ENCODE measurements at regions of chr4 and their contacts with region 1.

Region 1: GRCh38 chr4:48578132-48578968 is 88.3 kb downstream of the ZAR1 start:
- DNase-seq: peak; percentile 64
- ATAC-seq: peak; percentile 90
- H3K4me3 Mint-ChIP-seq: no peak overlapping the region
- H3K27ac Mint-ChIP-seq: no peak overlapping the region
- H3K4me1 Mint-ChIP-seq: peaks cover 5% of the 10 kb centered on the region
- H3K27me3 Mint-ChIP-seq: no peaks in the 10 kb centered on the region
- CTCF ChIP-seq: peak; percentile 93

Region 2: GRCh38 chr4:47668810-47669408 is 909.4 kb before region 1 on chr4:
- CTCF ChIA-PET with region 1: no interaction called
- POLR2A ChIA-PET with region 1: no interaction called
- intact Hi-C with region 1: no loop called
- DNase-seq: peak; percentile 35
- ATAC-seq: peak; percentile 65
- H3K4me3 Mint-ChIP-seq: no peak overlapping the region
- H3K27ac Mint-ChIP-seq: no peak overlapping the region
- H3K4me1 Mint-ChIP-seq: no peaks in the 10 kb centered on the region
- H3K27me3 Mint-ChIP-seq: peaks cover 10% of the 10 kb centered on the region
- CTCF ChIP-seq: peak; percentile 78

Region 3: GRCh38 chr4:48566034-48566384 is 12.3 kb before region 1 on chr4:
- CTCF ChIA-PET with region 1: no interaction called
- POLR2A ChIA-PET with region 1: no interaction called
- intact Hi-C with region 1: no loop called
- DNase-seq: no peak
- ATAC-seq: no peak
- H3K4me3 Mint-ChIP-seq: no peak overlapping the region
- H3K27ac Mint-ChIP-seq: no peak overlapping the region
- H3K4me1 Mint-ChIP-seq: peaks cover 2% of the 10 kb centered on the region
- H3K27me3 Mint-ChIP-seq: no peaks in the 10 kb centered on the region
- CTCF ChIP-seq: no peak

Region 4: GRCh38 chr4:48681856-48682255 is 103.5 kb after region 1 on chr4:
- CTCF ChIA-PET with region 1: interaction called, 18 read pairs
- POLR2A ChIA-PET with region 1: no interaction called
- intact Hi-C with region 1: loop called (anchors 2 kb)
- DNase-seq: peak; percentile 30
- ATAC-seq: peak; percentile 96
- H3K4me3 Mint-ChIP-seq: no peak overlapping the region
- H3K27ac Mint-ChIP-seq: peak overlapping the region; percentile 6
- H3K4me1 Mint-ChIP-seq: peaks cover 42% of the 10 kb centered on the region
- H3K27me3 Mint-ChIP-seq: no peaks in the 10 kb centered on the region
- CTCF ChIP-seq: peak; percentile 68

Region 5: GRCh38 chr4:48739560-48740019 is 161.2 kb after region 1 on chr4:
- CTCF ChIA-PET with region 1: no interaction called
- POLR2A ChIA-PET with region 1: no interaction called
- intact Hi-C with region 1: no loop called
- DNase-seq: no peak
- ATAC-seq: peak; percentile 70
- H3K4me3 Mint-ChIP-seq: no peak overlapping the region
- H3K27ac Mint-ChIP-seq: no peak overlapping the region
- H3K4me1 Mint-ChIP-seq: peaks cover 64% of the 10 kb centered on the region
- H3K27me3 Mint-ChIP-seq: no peaks in the 10 kb centered on the region
- CTCF ChIP-seq: no peak

Region 6: DNA sequence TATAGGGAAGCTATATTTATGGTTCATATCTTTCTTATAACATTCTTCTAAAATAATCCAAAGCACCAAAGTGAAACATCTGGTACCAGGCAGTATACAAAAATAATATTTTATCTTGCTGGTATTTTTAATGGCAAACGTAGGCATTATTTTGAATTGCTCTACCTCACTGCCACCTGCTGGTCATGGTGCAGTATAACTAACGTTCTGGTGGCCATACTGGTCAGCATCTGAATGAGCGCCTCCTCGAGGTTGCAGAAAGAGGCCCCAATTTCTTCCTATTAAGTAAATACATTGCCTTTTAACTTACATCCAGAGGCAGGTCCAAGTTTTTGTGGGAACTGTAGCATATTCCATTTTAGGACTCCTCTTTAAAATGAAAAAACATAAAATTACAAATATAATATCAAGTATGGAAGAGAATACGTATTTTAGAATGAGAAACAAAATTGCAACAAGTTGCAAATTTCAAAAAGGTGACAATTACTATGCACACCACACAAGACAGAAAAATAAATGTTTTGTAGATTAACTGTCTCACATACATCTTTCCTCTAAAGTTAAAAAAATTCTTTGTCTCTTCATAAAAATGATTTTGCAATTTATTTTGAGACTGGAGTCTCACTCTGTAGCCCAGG is 384.8 kb after region 1 on chr4:
- CTCF ChIA-PET with region 1: interaction called, 15 read pairs
- POLR2A ChIA-PET with region 1: no interaction called
- intact Hi-C with region 1: loop called (anchors 2 kb)
- DNase-seq: peak; percentile 80
- ATAC-seq: peak; percentile 95
- H3K4me3 Mint-ChIP-seq: no peak overlapping the region
- H3K27ac Mint-ChIP-seq: no peak overlapping the region
- H3K4me1 Mint-ChIP-seq: no peaks in the 10 kb centered on the region
- H3K27me3 Mint-ChIP-seq: no peaks in the 10 kb centered on the region
- CTCF ChIP-seq: peak; percentile 98